ENCODE measurements at regions of chrX and their contacts with region 1.

Region 1: GRCh38 chrX:16670998-16671397 is 21.0 kb downstream of the S100G start:
- DNase-seq: peak; percentile 70
- H3K4me3 Mint-ChIP-seq: no peak overlapping the region
- H3K27ac Mint-ChIP-seq: no peak overlapping the region
- H3K4me1 Mint-ChIP-seq: no peaks in the 10 kb centered on the region
- H3K27me3 Mint-ChIP-seq: no peaks in the 10 kb centered on the region

Region 2: GRCh38 chrX:16123222-16123786 is 547.7 kb before region 1 on chrX and contains the start of gene GRPR:
- intact Hi-C with region 1: loop called (anchors 10 kb)
- DNase-seq: peak; percentile 80
- H3K4me3 Mint-ChIP-seq: no peak within 1 kb of the TSS
- H3K27ac Mint-ChIP-seq: no peak within 1 kb of the TSS
- H3K4me1 Mint-ChIP-seq: peaks cover 17% of the 10 kb centered on the region
- H3K27me3 Mint-ChIP-seq: peaks cover 24% of the 10 kb centered on the region
- total RNA-seq, gene GRPR: not detected in 2 replicates

Region 3: GRCh38 chrX:16445166-16445752 is 225.7 kb before region 1 on chrX:
- intact Hi-C with region 1: loop called (anchors 2 kb)
- DNase-seq: peak; percentile 75
- H3K4me3 Mint-ChIP-seq: no peak overlapping the region
- H3K27ac Mint-ChIP-seq: no peak overlapping the region
- H3K4me1 Mint-ChIP-seq: peaks cover 4% of the 10 kb centered on the region
- H3K27me3 Mint-ChIP-seq: peaks cover 3% of the 10 kb centered on the region

Region 4: DNA sequence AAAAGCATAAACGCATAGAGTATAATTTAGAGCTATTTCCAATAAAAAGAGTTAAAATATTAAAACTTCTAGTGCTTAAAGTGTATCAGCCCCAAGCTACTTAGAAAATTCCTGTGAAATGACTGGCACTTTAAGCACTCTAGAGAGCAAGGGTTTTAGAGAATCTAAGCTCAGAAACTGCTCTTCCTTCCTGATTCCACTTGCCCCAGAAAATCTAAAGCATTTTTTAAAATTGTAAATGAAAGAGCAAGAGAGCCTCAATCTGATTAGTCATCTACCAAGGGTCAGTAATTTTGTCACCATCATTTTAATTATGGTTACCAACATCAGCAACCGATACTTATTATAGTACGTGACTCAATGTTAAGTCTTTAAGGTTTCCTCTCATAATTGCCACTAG is 16.5 kb after region 1 on chrX:
- intact Hi-C with region 1: no loop called
- DNase-seq: no peak
- H3K4me3 Mint-ChIP-seq: no peak overlapping the region
- H3K27ac Mint-ChIP-seq: no peak overlapping the region
- H3K4me1 Mint-ChIP-seq: no peaks in the 10 kb centered on the region
- H3K27me3 Mint-ChIP-seq: no peaks in the 10 kb centered on the region

Region 5: DNA sequence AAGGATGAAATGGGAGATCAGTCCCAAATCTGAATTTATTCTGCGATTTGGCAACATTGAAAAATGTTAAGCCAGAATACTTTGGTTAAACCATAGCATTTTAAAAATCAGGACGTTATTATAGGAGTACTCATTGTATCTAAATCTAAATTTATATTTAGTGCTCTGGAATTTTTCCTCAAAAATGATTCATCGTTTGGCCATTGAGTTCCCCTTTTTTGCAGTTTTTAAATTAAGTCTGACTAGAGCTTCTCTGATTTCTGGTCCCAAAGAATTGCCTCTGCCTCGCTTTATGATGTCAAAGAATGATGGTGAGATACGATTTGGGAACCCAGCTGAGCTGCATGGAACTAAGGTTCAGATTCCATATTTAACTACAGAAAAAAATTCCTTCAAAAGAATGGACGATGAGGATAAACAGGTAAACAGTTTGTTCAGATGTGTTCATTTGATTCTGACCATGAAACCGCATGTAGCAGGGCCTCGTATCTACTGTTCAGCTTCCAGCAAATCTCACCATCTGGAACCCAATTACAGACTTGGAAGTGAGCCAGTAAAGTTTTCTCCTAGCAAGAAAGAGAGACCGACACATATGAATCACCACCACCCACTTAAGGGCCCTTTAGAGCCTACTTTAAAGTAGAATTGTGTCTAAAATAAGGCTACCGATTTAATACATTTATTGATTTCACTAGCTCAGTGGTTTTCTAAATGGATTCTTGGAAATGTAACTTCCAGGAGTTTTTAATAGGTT is 351.0 kb after region 1 on chrX:
- intact Hi-C with region 1: no loop called
- DNase-seq: no peak
- H3K4me3 Mint-ChIP-seq: no peak overlapping the region
- H3K27ac Mint-ChIP-seq: no peak overlapping the region
- H3K4me1 Mint-ChIP-seq: no peaks in the 10 kb centered on the region
- H3K27me3 Mint-ChIP-seq: no peaks in the 10 kb centered on the region

Measured in activated CD4-positive, alpha-beta T cell treated with anti-CD3 and anti-CD28 coated beads, Interleukin-2, amount 10 ng/mL, durations not matched to agents 24 days and 14 days (primary cell).